GM10248 (cell line): ENCODE measurements at regions of chr15 and their contacts with region 1.

Region 1: DNA sequence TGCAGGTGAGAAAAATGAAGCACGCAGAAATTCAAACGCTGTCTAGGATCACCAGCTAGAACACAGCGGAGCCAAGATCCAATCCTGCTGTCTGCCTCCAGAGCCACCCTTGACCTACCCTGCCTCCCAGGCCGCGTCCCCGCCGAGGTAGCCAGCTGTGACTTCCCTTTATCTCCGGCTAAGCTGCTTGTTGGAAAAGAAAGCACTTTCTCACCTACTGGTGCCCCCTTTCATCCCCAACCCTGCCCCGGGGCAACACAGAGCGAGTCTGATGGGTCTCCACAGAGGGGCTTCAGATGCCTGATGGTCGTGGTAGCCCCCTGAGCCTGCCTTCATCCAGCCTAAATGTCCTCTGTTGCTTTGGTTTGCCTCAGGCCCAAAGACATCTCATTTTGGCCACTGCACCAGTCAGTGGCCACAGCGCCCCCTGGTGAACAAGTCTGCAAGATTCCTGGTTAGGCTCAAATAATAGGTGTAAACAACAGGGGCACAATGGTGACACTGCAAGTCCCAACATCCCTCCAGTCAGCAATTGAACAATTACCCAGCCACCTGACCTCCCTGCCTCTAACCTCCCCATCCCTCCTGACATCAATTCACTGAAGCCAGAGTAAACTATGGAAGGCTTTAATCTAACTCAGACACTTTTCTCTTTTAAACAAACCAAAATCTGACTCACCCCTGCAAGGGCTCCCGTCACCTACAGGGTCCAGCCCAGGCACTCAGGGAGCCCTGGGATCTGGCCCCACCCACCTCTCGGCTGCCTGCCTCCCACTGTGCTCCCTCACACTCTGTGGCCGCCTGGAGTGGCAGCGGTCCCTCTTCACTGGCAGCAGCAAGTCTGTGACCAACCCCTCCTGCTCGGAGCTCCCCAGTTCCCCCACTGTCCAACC is 27.3 kb upstream of the BCL2L10 start:
- DNase-seq: peak; percentile 86
- CTCF ChIP-seq: peak; percentile 87

Region 2: DNA sequence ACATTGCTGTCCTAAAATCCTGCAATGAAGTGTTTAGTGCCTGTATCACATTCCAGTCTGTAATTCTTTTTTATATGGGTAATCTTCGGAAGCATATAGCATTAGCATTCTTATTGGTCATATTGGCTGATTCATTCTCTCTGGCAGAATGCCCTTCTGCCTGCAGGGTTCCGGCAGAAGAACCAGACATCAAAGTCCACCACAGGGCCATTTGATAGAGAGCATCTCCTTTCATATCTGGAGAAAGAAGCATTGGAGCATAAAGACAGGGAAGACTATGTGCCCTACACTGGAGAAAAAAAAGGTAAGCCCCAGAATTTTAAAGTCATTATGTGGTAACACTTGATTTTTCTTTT is 270.8 kb before region 1 on chr15:
- CTCF ChIA-PET with region 1: no interaction called
- POLR2A ChIA-PET with region 1: no interaction called
- DNase-seq: no peak
- CTCF ChIP-seq: no peak

Region 3: GRCh38 chr15:51982013-51982769 is 157.7 kb before region 1 on chr15:
- CTCF ChIA-PET with region 1: interaction called, 18 read pairs
- POLR2A ChIA-PET with region 1: no interaction called
- DNase-seq: peak; percentile 78
- CTCF ChIP-seq: peak; percentile 56

Region 4: GRCh38 chr15:52071546-52071945 is 68.3 kb before region 1 on chr15:
- CTCF ChIA-PET with region 1: interaction called, 57 read pairs
- POLR2A ChIA-PET with region 1: no interaction called
- DNase-seq: no peak
- CTCF ChIP-seq: no peak

Region 5: DNA sequence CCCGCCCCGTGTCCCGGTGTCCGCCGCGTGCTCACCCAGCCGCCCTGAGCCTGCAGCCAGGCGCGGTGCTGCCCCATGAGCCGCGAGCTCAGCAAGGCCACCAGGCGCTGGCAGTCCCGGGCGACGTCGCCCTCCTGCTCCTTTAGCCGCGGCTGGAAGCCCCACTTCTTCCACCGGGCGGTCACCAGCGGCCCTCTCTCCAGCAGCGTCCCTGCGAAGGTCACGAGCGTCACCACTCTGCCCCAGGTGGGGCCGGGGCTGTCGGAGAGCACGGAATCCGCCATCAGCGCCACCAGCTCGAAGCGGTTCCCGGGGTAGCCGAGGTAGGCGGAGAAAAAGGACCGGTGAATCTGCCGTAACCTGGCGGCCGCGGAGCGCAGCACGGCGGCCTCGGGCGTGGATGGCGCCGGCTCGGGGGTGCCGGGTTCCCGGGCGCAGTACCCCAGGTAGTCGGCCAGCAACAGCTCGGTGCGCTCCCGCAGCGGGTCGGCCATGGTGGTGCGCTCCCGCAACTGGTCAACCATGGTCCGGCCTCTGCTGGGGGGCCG is 27.6 kb before region 1 on chr15:
- CTCF ChIA-PET with region 1: interaction called, 26 read pairs
- POLR2A ChIA-PET with region 1: no interaction called
- DNase-seq: peak; percentile 65
- CTCF ChIP-seq: no peak

Region 6: GRCh38 chr15:52124270-52124880 is 15.5 kb before region 1 on chr15:
- CTCF ChIA-PET with region 1: interaction called, 18 read pairs
- POLR2A ChIA-PET with region 1: no interaction called
- DNase-seq: no peak
- CTCF ChIP-seq: no peak

Region 7: GRCh38 chr15:52154896-52155865 is 15.3 kb after region 1 on chr15:
- CTCF ChIA-PET with region 1: interaction called, 33 read pairs
- POLR2A ChIA-PET with region 1: no interaction called
- DNase-seq: no peak
- CTCF ChIP-seq: no peak

Region 8: DNA sequence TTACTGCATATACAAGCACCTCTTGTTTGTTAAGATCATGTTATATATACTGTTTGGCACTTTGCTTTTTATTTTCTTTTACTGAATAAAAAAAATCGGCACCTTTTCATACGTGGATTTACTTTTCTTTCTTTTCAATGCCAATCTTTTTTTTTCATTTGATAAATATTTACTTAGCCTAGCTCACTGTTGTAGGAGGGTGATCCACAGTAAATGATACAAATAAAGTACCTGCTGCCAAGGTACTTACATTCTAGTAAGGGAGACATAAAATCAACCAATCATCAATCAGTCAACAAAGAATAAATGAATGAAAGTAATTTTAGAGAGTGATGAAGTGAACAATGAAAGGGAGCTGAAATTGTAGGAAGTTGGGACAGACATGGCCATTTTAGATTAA is 33.0 kb after region 1 on chr15:
- CTCF ChIA-PET with region 1: interaction called, 10 read pairs
- POLR2A ChIA-PET with region 1: no interaction called
- DNase-seq: no peak
- CTCF ChIP-seq: no peak